Heart left ventricle (tissue), 16 donors: ENCODE measurements at regions of chr11 and their contacts with region 1.

Region 1: DNA sequence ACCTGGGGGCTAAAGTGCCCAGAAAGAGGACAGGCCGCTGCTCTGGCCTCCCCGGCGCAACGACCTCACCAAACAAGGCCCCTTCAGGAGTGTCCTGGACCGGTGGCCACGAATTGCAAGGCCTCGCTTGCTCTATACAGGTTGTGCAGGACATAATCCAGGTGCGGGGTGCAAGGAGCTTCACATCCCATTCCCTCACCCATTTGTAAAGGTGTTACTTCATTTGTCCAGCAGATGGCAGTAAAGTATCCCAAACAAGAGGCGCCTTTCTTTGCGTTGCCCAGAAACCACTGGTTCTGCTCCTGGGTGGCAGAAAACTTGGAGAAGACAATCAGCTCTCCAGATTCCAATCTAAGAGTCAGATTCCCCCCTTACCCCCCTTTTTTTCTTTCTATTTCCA is 35.9 kb upstream of the PRDM11 start:
- DNase-seq: peak in 3 of 5 donors; percentile 24 to 48 (median 45)
- ATAC-seq: peak; percentile 37 to 77 (median 68)
- H3K4me3 ChIP-seq: no peak overlapping the region
- H3K27ac ChIP-seq: no peak overlapping the region
- H3K4me1 ChIP-seq: peaks cover 0 to 3% (median 0%) of the 10 kb centered on the region in 12 donors
- H3K27me3 ChIP-seq: peaks cover 0 to 13% (median 0%) of the 10 kb centered on the region in 9 donors
- CTCF ChIP-seq: peak; percentile 68 to 89 (median 82)
- POLR2A ChIP-seq: no peak

Region 2: GRCh38 chr11:44997566-44997965 is 113.0 kb before region 1 on chr11:
- intact Hi-C with region 1: no loop called
- DNase-seq: no peak
- ATAC-seq: no peak
- H3K4me3 ChIP-seq: no peak overlapping the region
- H3K27ac ChIP-seq: no peak overlapping the region
- H3K4me1 ChIP-seq: peaks cover 0 to 19% (median 1%) of the 10 kb centered on the region in 12 donors
- H3K27me3 ChIP-seq: no peaks in the 10 kb centered on the region
- CTCF ChIP-seq: no peak
- POLR2A ChIP-seq: no peak

Region 3: GRCh38 chr11:45225277-45225676 is 114.7 kb after region 1 on chr11:
- intact Hi-C with region 1: loop called in 3 of 10 experiments (anchors 5 to 10 kb)
- DNase-seq: no peak
- ATAC-seq: no peak
- H3K4me3 ChIP-seq: no peak overlapping the region
- H3K27ac ChIP-seq: no peak overlapping the region
- H3K4me1 ChIP-seq: no peaks in the 10 kb centered on the region
- H3K27me3 ChIP-seq: no peaks in the 10 kb centered on the region
- CTCF ChIP-seq: no peak
- POLR2A ChIP-seq: no peak

Region 4: GRCh38 chr11:45238724-45239123 is 128.2 kb after region 1 on chr11:
- intact Hi-C with region 1: loop called in 6 of 10 experiments (anchors 2 to 5 kb)
- DNase-seq: no peak
- ATAC-seq: peak; percentile 62 to 86 (median 70)
- H3K4me3 ChIP-seq: no peak overlapping the region
- H3K27ac ChIP-seq: peak overlapping the region in 1 of 12 donors; percentile 46
- H3K4me1 ChIP-seq: no peaks in the 10 kb centered on the region
- H3K27me3 ChIP-seq: peaks cover 0 to 3% (median 0%) of the 10 kb centered on the region in 9 donors
- CTCF ChIP-seq: no peak
- POLR2A ChIP-seq: no peak

Region 5: GRCh38 chr11:45252134-45252855 is 141.7 kb after region 1 on chr11:
- intact Hi-C with region 1: loop called in 1 of 10 experiments (anchors 5 kb)
- DNase-seq: peak; percentile 35 to 71 (median 68)
- ATAC-seq: peak; percentile 58 to 94 (median 82)
- H3K4me3 ChIP-seq: peak overlapping the region in 4 of 12 donors; percentile 1 to 15 (median 8)
- H3K27ac ChIP-seq: no peak overlapping the region
- H3K4me1 ChIP-seq: peaks cover 0 to 3% (median 0%) of the 10 kb centered on the region in 12 donors
- H3K27me3 ChIP-seq: peaks cover 0 to 14% (median 0%) of the 10 kb centered on the region in 9 donors
- CTCF ChIP-seq: peak; percentile 46 to 73 (median 60)
- POLR2A ChIP-seq: no peak

Region 6: GRCh38 chr11:45332276-45332934 is 221.8 kb after region 1 on chr11:
- intact Hi-C with region 1: loop called (anchors 1 to 5 kb)
- DNase-seq: peak in 1 of 5 donors; percentile 38
- ATAC-seq: peak; percentile 57 to 70 (median 69)
- H3K4me3 ChIP-seq: peak overlapping the region in 9 of 12 donors; percentile 1 to 44 (median 35)
- H3K27ac ChIP-seq: peak overlapping the region; percentile 55 to 80 (median 73)
- H3K4me1 ChIP-seq: peaks cover 0 to 22% (median 5%) of the 10 kb centered on the region in 12 donors
- H3K27me3 ChIP-seq: no peaks in the 10 kb centered on the region
- CTCF ChIP-seq: peak; percentile 74 to 93 (median 88)
- POLR2A ChIP-seq: no peak